ENCODE measurements at regions of chr13 and their contacts with region 1.

Region 1: DNA sequence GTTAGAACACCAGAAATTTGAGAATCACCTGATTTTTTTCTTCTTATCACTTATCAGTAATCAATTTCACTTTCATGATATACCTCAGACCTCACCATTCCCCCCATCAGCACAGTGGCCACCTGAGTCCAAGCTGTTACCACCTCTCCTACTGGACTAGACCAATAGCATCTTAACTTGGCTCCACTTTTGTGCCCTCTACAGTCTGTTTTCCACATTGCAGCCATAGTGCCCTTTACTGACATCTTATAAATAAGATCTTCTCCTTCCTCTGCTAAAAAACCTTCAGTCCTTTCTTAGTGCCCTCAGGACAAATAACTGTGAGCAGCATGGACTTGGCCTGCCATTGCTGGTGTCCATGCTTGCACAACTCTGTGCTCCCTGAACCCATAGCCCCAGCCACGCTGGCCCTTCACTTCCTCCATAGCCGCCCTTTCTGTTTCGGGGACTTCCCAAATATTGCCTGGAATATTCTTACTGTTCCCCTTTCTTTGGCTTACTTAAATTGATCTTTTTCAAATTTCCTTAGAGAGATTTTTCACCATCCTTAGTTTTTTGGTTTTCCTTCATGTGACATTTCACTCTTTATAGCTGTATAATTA is 380.8 kb downstream of the LMO7 start:
- DNase-seq: no peak

Region 2: GRCh38 chr13:74978596-74978995 is 1038.3 kb before region 1 on chr13:
- intact Hi-C with region 1: no loop called
- DNase-seq: no peak

Region 3: DNA sequence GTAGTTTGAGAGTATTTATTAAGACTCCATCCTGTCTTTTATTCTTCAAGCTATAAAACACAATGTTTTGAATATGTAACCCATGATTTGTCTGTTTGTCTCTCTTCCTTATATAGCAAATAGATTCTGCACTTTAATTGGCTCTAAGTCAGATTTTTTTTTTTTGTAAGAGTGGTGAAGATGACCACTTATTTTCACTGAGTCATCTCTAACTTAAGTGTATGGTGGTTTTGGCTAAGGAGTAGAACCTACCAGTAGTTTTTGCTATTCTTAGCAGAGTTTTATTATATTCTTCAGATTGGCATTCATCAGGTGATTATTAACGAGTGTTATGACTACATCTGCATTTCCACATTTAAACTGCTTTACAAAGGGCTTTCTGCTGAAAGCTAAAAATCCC is 186.1 kb before region 1 on chr13:
- intact Hi-C with region 1: no loop called
- DNase-seq: no peak

Region 4: GRCh38 chr13:75908141-75908540 is 108.8 kb before region 1 on chr13:
- intact Hi-C with region 1: loop called (anchors 10 kb)
- DNase-seq: no peak

Region 5: GRCh38 chr13:76473552-76474134 is 456.7 kb after region 1 on chr13:
- intact Hi-C with region 1: loop called (anchors 10 kb)
- DNase-seq: peak; percentile 79